Activated CD4-positive, alpha-beta T cell treated with anti-CD3 and anti-CD28 coated beads, Interleukin-2, amount 10 ng/mL, durations not matched to agents 24 days and 14 days (primary cell): ENCODE measurements at regions of chr14 and their contacts with region 1.

Region 1: DNA sequence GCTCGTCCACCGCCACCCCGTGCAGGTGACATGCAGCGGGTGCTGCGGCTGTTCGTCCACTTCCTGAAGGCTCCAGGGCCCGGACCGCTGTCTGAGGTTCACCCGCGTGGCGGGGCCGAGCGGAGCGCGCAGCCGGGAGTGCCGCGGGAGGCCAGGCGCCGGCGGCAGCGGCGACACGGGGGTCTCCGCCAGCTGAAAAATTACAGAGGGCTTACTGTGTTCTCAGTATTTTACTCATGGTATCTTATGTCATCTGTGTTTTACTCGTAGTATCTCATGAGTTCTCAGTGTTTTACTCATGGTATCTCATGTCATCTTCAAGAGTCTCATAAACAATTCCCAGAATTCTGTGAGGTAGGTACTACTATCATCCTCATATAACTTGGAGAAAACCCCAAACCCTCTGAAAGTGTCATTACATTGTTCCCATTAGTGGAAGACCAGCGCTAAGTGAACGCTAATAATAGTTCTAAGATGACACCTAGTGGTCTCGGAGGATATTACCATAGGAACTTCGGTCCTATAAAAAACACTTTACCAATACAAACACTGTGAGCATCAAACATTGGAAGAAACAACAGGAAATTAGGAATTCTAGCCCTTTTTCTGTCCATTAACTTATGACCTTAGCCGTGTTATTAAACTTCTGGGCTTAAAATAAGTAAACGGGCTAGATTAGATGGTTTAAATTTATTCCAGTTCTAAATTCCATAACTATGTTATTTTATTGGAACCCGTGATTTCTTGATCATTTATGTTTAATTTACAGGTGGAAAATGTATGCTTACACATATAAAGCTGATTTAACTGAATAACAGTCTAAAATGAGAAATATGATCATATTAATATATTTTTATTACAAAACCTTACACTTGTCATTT is 32.4 kb downstream of the AK7 start:
- DNase-seq: peak; percentile 79
- H3K4me3 Mint-ChIP-seq: peak overlapping the region; percentile 80
- H3K27ac Mint-ChIP-seq: no peak overlapping the region
- H3K4me1 Mint-ChIP-seq: peaks cover 4% of the 10 kb centered on the region
- H3K27me3 Mint-ChIP-seq: peaks cover 7% of the 10 kb centered on the region

Region 2: DNA sequence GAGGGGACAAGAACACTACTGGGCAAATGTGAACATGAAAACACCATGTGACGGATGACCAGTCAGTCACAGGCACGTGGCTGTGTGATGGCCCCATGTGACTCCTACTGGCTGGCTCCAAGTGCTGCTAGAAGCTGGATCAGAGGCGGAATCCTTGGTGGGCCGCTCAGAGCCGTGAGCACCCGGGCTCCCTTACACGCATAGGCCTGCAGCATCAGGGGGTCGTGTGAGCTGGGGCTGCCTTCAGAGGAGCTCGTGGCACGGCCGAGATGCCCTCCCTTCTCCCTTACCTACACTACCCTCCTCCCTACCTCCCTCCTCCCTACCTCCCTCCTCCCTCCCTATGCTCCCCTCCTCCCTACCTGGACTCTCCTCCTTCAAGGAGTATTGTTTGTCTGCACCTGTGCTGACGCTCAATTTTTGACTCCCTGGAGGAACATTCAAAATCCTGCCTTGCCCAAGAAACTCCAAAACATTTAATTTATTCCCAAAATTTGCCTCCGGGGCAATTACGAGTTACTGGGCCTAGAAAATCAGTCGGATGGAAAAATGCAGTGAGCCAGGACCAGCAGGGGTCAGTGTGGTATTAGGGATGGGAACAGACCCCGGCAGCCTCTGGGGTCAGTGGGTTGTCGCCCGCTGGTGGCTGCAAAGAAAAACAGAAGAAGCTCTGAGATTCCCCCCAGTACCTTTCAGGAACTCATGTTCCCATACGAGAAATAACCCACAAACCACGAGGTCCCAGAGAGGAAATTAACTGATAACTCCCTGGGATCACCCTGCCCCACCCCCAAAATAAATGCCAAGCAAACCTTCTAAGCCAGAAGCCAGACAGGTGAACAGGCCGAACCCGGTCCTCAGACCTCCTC is 324.0 kb before region 1 on chr14:
- intact Hi-C with region 1: loop called (anchors 2 kb)
- DNase-seq: peak; percentile 81
- H3K4me3 Mint-ChIP-seq: no peak overlapping the region
- H3K27ac Mint-ChIP-seq: no peak overlapping the region
- H3K4me1 Mint-ChIP-seq: no peaks in the 10 kb centered on the region
- H3K27me3 Mint-ChIP-seq: no peaks in the 10 kb centered on the region

Region 3: DNA sequence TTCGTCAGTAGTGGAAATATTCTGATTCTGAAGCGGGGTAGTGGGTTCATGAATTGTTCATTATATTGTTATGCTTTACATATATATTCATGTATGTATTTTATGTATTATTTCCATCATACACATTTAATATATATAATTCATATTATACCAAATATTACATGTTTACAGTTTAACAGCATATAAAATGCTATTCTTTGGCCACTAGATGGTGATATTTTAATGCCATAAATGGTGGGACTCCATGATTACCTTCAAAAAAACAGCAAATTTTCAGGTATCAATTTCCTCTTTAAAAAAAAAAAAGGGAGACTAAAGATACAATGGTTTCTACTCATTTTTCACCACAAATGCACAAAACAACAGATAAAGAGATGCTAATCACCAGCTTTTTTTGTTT is 127.3 kb before region 1 on chr14:
- intact Hi-C with region 1: loop called (anchors 1 kb)
- DNase-seq: no peak
- H3K4me3 Mint-ChIP-seq: no peak overlapping the region
- H3K27ac Mint-ChIP-seq: no peak overlapping the region
- H3K4me1 Mint-ChIP-seq: no peaks in the 10 kb centered on the region
- H3K27me3 Mint-ChIP-seq: no peaks in the 10 kb centered on the region

Region 4: GRCh38 chr14:96683562-96684289 is 259.4 kb after region 1 on chr14:
- intact Hi-C with region 1: no loop called
- DNase-seq: no peak
- H3K4me3 Mint-ChIP-seq: no peak overlapping the region
- H3K27ac Mint-ChIP-seq: no peak overlapping the region
- H3K4me1 Mint-ChIP-seq: no peaks in the 10 kb centered on the region
- H3K27me3 Mint-ChIP-seq: peaks cover 2% of the 10 kb centered on the region